PC-9 (cell line): ENCODE measurements at regions of chr15 and their contacts with region 1.

Region 1: DNA sequence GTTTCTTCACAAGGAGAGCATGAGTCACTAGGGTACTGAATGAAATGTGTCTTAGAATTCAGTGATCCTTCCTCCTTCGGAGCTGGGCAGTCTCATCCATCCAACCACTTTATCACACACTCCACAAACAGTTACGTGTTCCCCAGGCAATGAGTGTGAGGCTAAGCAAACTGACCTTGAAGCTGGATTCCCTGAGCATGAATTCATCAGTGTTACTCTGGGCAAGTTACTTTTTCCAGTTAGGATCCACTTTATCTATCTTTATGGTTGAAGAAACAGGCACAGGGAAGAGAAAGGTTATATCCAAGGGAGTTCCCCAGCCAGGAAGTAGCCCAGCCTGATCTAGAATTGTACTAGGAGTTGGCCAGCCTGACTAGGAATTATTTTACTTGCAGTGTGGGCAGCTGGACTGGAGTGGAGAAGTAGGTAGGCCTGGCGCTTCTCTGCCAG is 17.1 kb upstream of the GCNT3 start:
- DNase-seq: peak; percentile 48 to 92
- H3K4me3 ChIP-seq: no peak overlapping the region
- H3K27ac ChIP-seq: peak overlapping the region; percentile 93
- H3K4me1 ChIP-seq: peaks cover 25% of the 10 kb centered on the region
- H3K27me3 ChIP-seq: no peaks in the 10 kb centered on the region
- CTCF ChIP-seq: no peak

Region 2: DNA sequence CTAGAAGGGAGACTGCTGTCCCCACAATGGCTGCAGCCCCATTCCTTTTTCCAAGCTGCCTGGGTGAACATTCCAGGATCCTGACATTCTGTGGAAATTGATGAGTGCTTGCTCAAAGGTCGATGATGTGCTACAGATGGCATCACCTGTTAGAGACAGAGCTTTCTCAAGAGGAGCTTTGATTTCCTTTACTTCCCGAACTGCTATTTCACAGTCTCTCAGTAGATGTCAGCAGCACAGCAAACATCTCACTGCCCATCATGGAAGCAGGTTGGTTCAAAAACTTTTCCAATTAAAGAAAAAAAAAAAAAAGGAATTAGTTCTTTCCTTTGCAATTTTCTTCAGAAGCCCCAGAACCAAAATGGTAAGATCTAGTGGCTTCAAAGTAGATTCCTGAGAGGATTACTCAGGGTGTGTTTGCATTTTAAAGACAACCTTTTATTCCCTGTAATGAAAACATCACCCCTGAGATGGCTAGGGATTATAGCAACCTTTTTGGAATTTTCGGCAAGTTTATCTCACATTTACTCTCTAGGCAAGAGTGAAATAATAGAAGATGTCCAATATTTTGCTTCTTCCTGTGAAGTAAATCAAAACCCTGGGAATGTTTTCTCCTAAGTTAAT is 1843.2 kb before region 1 on chr15:
- CTCF ChIA-PET with region 1: interaction called, 12 read pairs
- POLR2A ChIA-PET with region 1: no interaction called
- intact Hi-C with region 1: no loop called
- DNase-seq: no peak
- H3K4me3 ChIP-seq: no peak overlapping the region
- H3K27ac ChIP-seq: no peak overlapping the region
- H3K4me1 ChIP-seq: no peaks in the 10 kb centered on the region
- H3K27me3 ChIP-seq: no peaks in the 10 kb centered on the region
- CTCF ChIP-seq: peak; percentile 56

Region 3: GRCh38 chr15:57866149-57866736 is 1728.3 kb before region 1 on chr15:
- CTCF ChIA-PET with region 1: no interaction called
- POLR2A ChIA-PET with region 1: interaction called, 21 read pairs
- intact Hi-C with region 1: no loop called
- DNase-seq: peak in 1 of 2 experiments; percentile 35
- H3K4me3 ChIP-seq: no peak overlapping the region
- H3K27ac ChIP-seq: no peak overlapping the region
- H3K4me1 ChIP-seq: no peaks in the 10 kb centered on the region
- H3K27me3 ChIP-seq: no peaks in the 10 kb centered on the region
- CTCF ChIP-seq: peak; percentile 74; the same call in 1 of the 2 replicates

Region 4: GRCh38 chr15:59553879-59554735 is 40.4 kb before region 1 on chr15:
- CTCF ChIA-PET with region 1: no interaction called
- POLR2A ChIA-PET with region 1: interaction called, 4 read pairs
- intact Hi-C with region 1: loop called (anchors 1 kb)
- DNase-seq: peak; percentile 49 to 90
- H3K4me3 ChIP-seq: no peak overlapping the region
- H3K27ac ChIP-seq: peak overlapping the region; percentile 53
- H3K4me1 ChIP-seq: peaks cover 53% of the 10 kb centered on the region
- H3K27me3 ChIP-seq: no peaks in the 10 kb centered on the region
- CTCF ChIP-seq: no peak

Region 5: DNA sequence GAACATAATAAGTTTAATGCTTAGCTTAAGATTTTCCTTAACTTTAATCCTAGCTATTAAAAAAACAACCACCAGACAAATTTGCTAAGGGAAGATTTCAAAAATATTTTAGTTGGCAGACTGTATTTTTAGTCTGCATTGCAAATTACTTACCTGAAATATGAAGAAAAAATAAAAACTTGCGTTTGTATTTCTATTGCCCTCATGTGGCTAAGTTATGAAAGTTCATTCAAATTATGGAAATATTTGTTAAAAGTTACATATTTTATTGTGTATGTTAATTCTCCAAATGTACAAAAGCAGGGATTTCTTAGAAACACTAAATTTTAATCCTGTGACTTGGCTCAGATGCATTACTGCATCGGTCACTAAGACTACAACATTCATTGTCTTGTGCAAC is 47.8 kb after region 1 on chr15:
- CTCF ChIA-PET with region 1: no interaction called
- POLR2A ChIA-PET with region 1: no interaction called
- intact Hi-C with region 1: no loop called
- DNase-seq: no peak
- H3K4me3 ChIP-seq: no peak overlapping the region
- H3K27ac ChIP-seq: no peak overlapping the region
- H3K4me1 ChIP-seq: no peaks in the 10 kb centered on the region
- H3K27me3 ChIP-seq: no peaks in the 10 kb centered on the region
- CTCF ChIP-seq: peak; percentile 56

Region 6: DNA sequence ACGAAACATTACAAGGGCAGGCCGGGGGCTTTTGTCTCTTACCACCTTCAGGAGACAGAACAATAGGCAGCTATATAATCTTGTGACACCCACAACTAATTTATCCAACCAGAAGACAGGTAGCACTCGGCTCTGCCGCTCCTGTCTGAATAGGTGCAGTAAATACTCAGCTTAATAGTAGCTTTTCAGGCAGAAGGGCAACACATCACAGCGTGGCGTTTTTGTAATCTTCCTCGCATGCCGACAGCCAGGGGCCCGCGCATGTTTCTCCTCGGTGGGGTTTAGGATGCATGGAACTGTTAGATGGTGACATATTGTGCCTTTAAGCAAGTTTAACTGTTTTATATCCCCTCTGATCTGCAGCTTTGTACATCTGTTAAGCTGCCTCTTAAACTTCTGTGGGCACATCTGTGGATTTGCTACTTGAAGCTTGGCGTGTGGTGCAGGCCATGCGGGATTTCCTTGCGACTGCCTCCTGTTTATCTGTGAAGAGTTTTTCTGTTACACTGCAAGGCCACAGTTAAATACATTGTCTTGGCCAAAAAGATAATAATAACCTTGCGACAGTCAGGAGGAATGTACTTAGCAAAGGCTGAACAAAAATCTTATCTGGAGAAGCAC is 217.8 kb after region 1 on chr15:
- CTCF ChIA-PET with region 1: no interaction called
- POLR2A ChIA-PET with region 1: no interaction called
- intact Hi-C with region 1: no loop called
- DNase-seq: no peak
- H3K4me3 ChIP-seq: no peak overlapping the region
- H3K27ac ChIP-seq: no peak overlapping the region
- H3K4me1 ChIP-seq: no peaks in the 10 kb centered on the region
- H3K27me3 ChIP-seq: no peaks in the 10 kb centered on the region
- CTCF ChIP-seq: no peak

Region 7: DNA sequence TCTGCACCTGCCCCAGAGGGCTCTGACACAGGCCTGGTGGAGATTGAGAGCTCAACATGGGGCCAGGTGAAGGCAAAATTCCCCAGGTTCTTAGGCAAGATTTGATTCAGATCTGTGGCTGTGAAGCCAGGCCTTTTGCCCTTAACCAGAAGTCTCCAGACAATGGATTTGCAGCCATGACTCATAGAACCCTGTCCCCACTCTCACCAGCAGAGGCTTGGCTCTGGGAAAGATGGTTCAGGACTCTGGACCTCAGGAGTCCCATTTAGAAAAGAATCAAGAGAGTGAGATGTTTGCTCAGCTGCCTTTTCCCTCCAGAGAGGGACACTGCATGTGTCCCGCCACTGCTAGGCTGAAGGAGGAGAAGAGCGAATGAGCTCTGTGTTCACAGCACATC is 1245.8 kb after region 1 on chr15:
- CTCF ChIA-PET with region 1: no interaction called
- POLR2A ChIA-PET with region 1: no interaction called
- intact Hi-C with region 1: no loop called
- DNase-seq: no peak
- H3K4me3 ChIP-seq: no peak overlapping the region
- H3K27ac ChIP-seq: no peak overlapping the region
- H3K4me1 ChIP-seq: no peaks in the 10 kb centered on the region
- H3K27me3 ChIP-seq: peaks cover 3% of the 10 kb centered on the region; the same call in 1 of the 2 replicates
- CTCF ChIP-seq: no peak